ENCODE measurements at regions of chr22 and their contacts with region 1.

Region 1: GRCh38 chr22:20507253-20508066 is at the start of gene MED15:
- DNase-seq: peak; percentile 92 to 96
- ATAC-seq: peak; percentile 89 to 93 (median 92)
- H3K4me3 ChIP-seq: peak within 1 kb of the TSS; percentile 83
- H3K27ac ChIP-seq: peak within 1 kb of the TSS; percentile 95
- H3K4me1 ChIP-seq: peaks cover 27% of the 10 kb centered on the region
- H3K27me3 ChIP-seq: no peaks in the 10 kb centered on the region
- CTCF ChIP-seq: no peak
- total RNA-seq, gene MED15: 46.4 to 94.8 (median 73.6) TPM

Region 2: GRCh38 chr22:20550821-20551744 is 43.6 kb after region 1 on chr22:
- intact Hi-C with region 1: no loop called
- DNase-seq: peak in 1 of 2 donors; percentile 58
- ATAC-seq: peak in 3 of 4 donors; percentile 23 to 35 (median 29)
- H3K4me3 ChIP-seq: no peak overlapping the region
- H3K27ac ChIP-seq: peak overlapping the region; percentile 93
- H3K4me1 ChIP-seq: peaks cover 93% of the 10 kb centered on the region
- H3K27me3 ChIP-seq: no peaks in the 10 kb centered on the region
- CTCF ChIP-seq: no peak

Region 3: DNA sequence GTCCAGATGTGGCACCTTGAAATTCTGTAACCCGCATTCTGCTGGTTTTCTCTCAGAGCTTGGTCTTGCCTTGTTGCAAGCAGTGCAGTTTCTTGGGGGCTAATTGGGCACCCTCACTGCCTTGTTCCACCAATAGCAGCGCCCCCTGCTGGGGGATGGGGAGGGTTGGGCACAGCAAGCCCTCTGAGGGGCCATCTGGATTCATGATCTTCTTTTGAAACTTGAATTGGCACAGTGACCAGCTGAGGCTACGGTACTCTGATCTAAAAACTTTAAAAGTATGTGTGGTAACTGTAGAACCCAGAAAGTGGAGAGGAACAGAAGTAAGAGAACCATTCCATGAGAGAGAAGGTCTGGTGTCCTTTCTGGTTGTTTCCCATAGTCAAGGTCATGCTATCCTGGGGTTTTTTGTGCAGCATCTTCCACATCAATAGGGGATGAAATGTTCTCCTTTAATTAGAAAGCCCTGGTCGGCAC is 64.1 kb after region 1 on chr22:
- intact Hi-C with region 1: loop called in 1 of 2 experiments (anchors 5 kb)
- DNase-seq: peak; percentile 64 to 74
- ATAC-seq: peak in 1 of 4 donors; percentile 25
- H3K4me3 ChIP-seq: no peak overlapping the region
- H3K27ac ChIP-seq: no peak overlapping the region
- H3K4me1 ChIP-seq: peaks cover 16% of the 10 kb centered on the region
- H3K27me3 ChIP-seq: no peaks in the 10 kb centered on the region
- CTCF ChIP-seq: peak; percentile 56

Measured in psoas muscle (tissue), 8 donors.